ENCODE measurements at regions of chr2 and their contacts with region 1.

Region 1: DNA sequence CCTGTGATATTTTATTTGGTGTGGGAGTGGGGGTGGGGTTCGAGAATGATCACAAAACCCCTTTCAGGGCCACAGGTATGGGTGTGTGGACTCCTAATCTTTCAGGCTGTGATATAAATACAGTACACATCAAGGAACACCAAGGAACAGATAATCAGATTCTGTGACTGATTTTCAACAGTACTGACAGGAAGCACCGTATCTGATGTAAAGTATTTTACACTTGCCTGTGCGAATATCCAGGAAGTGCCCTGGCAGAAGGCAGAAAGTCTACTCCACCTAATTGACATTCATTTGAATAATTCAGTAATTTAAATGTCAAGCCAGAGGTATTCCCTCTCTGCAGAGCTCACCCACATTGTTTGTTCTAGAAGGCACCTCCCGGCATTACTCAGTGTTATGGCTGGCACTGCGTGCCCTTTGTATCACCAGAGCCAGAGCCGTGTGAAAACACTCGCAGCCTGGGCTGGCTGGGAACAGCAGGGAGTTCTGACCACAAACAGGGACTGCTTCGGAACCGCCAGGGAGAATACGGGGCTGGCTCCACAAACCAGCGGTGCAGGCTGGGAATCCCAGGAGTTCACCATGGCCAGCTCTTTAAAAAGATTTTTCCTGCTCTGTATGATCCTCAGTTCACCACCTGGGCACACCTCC is 91.8 kb downstream of the ACVR1 start:
- DNase-seq: peak; percentile 50 to 86
- H3K4me3 ChIP-seq: no peak overlapping the region
- CTCF ChIP-seq: no peak
- POLR2A ChIP-seq: no peak

Region 2: DNA sequence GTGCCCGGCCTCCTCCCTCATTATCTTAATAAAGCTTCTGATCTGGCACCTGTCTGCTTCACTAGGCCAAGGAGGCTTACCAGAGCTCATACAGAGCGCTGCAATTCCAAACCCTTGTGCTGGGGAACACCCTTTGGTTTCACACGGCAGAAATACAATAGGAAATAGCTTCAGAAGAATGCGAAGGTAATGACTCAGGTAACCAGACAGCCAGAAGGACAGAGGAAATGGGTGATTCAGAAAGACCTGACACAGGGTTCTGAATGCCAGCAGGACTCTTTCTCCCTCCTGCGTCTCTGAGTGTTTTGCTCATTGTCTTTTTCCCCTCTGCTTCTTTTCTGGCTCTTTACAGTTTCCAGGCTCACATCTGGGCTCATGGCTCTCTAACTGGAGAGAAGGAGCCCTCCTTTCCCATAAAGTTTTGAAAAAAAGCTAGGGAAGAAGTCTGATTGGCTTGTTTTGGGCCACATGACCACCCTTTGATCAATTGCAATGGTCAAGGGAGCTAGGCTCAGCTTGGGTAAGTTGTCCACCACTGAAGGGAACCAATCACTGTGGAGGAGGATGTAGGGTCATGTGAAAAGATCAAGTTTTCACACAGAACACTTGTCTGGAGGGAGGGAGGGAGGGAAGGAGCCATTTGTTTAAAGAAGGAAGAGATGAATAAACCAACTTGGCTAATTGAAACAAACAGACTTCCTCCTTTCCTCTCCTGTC is 226.9 kb after region 1 on chr2:
- intact Hi-C with region 1: loop called (anchors 5 kb)
- DNase-seq: no peak
- H3K4me3 ChIP-seq: no peak overlapping the region
- CTCF ChIP-seq: no peak
- POLR2A ChIP-seq: no peak

Region 3: DNA sequence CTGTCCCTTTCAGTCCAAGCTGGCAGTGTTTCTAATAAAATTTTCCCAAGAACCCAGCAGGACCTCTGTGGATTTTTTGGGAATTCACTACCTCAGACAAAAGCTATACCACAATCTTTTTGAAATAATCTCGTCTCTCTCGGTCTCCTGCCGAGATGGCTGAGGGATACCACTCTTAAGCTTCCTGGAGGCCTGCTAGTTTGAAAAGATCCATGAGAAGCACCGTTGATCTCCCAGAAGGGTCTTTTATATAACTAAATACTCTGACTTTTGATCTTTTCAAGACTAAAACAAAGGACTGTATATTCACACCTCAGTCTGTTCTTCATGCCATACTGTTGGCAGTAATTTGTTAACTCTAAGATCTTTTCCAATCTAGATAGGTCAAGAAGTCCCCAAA is 459.1 kb after region 1 on chr2:
- intact Hi-C with region 1: no loop called
- DNase-seq: no peak
- H3K4me3 ChIP-seq: no peak overlapping the region
- CTCF ChIP-seq: no peak
- POLR2A ChIP-seq: no peak

Region 4: GRCh38 chr2:158346032-158346431 is 561.7 kb after region 1 on chr2:
- intact Hi-C with region 1: no loop called
- DNase-seq: no peak
- H3K4me3 ChIP-seq: no peak overlapping the region
- CTCF ChIP-seq: no peak
- POLR2A ChIP-seq: no peak

Measured in lower leg skin (tissue), 4 donors.